Heart right ventricle (tissue), 16 donors: ENCODE measurements at regions of chr11 and their contacts with region 1.

Region 1: GRCh38 chr11:76131671-76132631 is 74.4 kb downstream of the WNT11 start:
- DNase-seq: no peak
- ATAC-seq: peak; percentile 39 to 76 (median 70)
- H3K4me3 ChIP-seq: no peak overlapping the region
- H3K27ac ChIP-seq: peak overlapping the region in 9 of 10 donors; percentile 5 to 69 (median 49)
- H3K4me1 ChIP-seq: peaks cover 9 to 66% (median 43%) of the 10 kb centered on the region in 9 donors
- H3K27me3 ChIP-seq: no peaks in the 10 kb centered on the region
- CTCF ChIP-seq: no peak

Region 2: GRCh38 chr11:76083563-76084451 is 48.1 kb before region 1 on chr11:
- intact Hi-C with region 1: loop called in 1 of 10 experiments (anchors 10 kb)
- DNase-seq: no peak
- ATAC-seq: peak in 6 of 8 donors; percentile 52 to 89 (median 76)
- H3K4me3 ChIP-seq: no peak overlapping the region
- H3K27ac ChIP-seq: peak overlapping the region in 7 of 10 donors; percentile 10 to 76 (median 60)
- H3K4me1 ChIP-seq: peaks cover 3 to 50% (median 19%) of the 10 kb centered on the region in 9 donors
- H3K27me3 ChIP-seq: no peaks in the 10 kb centered on the region
- CTCF ChIP-seq: no peak